ENCODE measurements at regions of chr14 and their contacts with region 1.

Region 1: GRCh38 chr14:85247071-85247470 is 282.9 kb upstream of the FLRT2 start:
- DNase-seq: no peak
- H3K4me3 ChIP-seq: no peak overlapping the region
- H3K27ac ChIP-seq: no peak overlapping the region
- H3K4me1 ChIP-seq: no peaks in the 10 kb centered on the region
- H3K27me3 ChIP-seq: no peaks in the 10 kb centered on the region
- CTCF ChIP-seq: no peak
- POLR2A ChIP-seq: no peak

Region 2: DNA sequence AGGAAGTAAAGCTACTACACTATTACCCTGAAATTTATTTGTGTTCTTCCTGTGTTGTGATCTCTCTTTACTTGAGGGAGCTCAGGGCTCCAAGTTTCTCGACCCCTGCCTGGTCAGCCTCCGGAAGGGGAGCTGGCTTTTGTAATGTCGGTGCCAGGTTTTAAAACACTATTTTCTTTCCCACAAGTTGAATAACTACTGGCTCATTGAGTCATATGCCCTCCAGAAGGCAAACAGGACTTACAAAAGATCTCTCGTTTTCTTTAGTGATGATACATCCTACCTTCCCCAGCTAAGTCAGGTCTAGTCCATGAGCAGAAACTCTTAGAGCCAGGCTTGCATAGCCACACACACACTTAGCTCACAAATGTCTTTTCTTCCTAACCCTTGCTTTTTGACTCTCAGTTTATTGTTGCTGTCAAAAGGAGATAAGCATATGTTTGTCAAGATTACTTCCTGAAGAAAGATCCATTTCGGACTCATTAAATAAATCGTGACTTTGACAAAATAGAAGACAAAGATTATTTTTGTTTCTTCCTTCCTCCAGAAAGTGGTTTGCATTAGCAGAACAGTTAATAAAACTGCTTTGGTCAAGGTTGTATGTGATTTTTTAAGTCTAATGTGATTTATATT is 73.0 kb after region 1 on chr14:
- intact Hi-C with region 1: loop called (anchors 2 kb)
- DNase-seq: no peak
- H3K4me3 ChIP-seq: no peak overlapping the region
- H3K27ac ChIP-seq: no peak overlapping the region
- H3K4me1 ChIP-seq: no peaks in the 10 kb centered on the region
- H3K27me3 ChIP-seq: no peaks in the 10 kb centered on the region
- CTCF ChIP-seq: no peak
- POLR2A ChIP-seq: no peak

Region 3: GRCh38 chr14:85528080-85528896 is 281.2 kb after region 1 on chr14:
- intact Hi-C with region 1: no loop called
- DNase-seq: no peak
- H3K4me3 ChIP-seq: peak overlapping the region; percentile 62 to 80 (median 66)
- H3K27ac ChIP-seq: peak overlapping the region; percentile 52 to 86
- H3K4me1 ChIP-seq: no peaks in the 10 kb centered on the region
- H3K27me3 ChIP-seq: peaks cover 0 to 35% of the 10 kb centered on the region in 2 donors
- CTCF ChIP-seq: no peak
- POLR2A ChIP-seq: no peak

Measured in breast epithelium (tissue), 4 donors.